MCF 10A (cell line): ENCODE measurements at regions of chr6 and their contacts with region 1.

Region 1: DNA sequence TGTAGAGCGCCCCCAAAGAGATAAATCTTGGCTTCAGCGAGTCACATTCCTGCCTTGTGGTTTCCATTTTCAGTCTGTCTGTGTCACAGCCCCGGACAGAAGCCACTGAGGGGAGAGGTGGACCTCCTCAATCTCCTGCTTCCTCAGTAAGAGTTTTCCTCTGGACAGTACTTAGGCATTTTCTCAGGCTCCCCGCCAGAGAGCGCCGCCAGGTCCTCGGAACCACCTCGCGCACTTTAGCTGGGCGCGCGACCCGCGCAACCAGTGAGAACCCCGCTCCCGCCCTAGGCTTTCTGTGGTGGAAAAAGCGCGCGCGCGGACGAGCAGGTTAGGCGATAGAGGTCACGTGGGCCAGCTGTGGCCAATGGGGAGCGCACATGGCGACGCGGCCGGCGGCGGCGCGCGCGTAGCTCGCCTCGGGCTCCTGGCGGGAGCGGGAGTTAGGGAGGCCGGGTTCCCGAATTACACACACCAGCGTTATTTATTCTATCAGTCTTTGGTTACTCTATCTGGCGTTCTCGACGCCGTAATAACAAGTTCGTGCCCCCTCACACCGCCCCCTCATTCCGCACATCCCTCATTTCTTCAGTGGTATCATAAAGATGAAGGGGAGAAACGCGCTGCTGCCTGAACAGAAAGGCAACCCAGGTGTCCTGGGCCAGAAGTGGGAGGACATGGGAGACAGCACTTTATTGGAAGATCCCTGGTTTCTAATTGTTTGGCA is 19.4 kb downstream of the PXT1 start:
- DNase-seq: peak; percentile 98
- H3K4me3 Mint-ChIP-seq: peak overlapping the region; percentile 73
- H3K27ac Mint-ChIP-seq: peak overlapping the region; percentile 91
- H3K4me1 Mint-ChIP-seq: peaks cover 28% of the 10 kb centered on the region
- H3K27me3 Mint-ChIP-seq: no peaks in the 10 kb centered on the region
- CTCF ChIP-seq: peak; percentile 63

Region 2: DNA sequence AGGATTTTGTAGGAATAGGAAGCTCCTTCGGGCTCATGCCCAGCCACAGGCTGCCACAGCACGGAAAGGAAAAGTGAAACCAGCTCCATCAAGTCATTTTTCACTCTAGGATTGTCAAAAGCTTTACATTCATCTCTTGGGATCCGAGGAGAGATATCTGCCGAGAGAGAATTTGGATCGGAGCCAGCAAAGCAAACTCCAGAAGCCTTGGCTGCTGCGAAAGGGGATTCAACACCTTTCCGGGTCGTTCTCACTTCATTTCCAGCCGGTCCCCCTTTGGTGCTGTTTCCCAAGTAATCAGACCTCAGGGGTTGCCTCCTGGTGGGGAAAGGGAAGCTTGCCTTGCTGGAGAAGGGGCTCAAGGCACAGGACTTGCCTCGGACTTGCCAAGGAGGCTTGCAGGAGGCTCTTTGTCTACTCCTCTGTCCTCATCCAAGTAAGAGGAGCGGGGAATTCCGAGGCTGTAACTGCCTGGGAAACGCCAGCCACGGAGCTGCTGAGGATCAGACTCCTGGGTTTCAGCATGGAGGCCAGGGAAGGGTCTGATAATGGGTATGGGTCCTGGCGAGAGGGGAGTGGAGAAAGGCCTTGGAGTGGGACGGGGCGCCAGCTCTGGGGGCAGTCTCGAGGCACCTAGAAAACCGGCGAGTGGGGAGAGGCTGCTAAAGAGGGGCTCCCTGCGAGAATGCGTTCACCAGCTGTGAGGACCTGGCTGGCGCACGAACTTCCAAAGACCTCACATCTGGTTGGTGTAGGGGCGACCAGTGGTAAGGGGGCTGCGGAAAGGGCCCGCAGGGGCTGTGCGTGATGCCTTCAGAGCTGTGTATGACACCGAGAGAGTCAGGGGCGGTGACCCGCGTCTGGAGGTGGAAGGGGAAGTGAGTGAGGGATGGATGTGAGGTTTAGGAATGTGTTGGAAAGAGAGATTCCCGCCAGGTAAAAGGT is 36.5 kb before region 1 on chr6:
- CTCF ChIA-PET with region 1: no interaction called
- POLR2A ChIA-PET with region 1: interaction called, 11 read pairs
- intact Hi-C with region 1: no loop called
- DNase-seq: peak; percentile 45
- H3K4me3 Mint-ChIP-seq: peak overlapping the region; percentile 71
- H3K27ac Mint-ChIP-seq: peak overlapping the region; percentile 28
- H3K4me1 Mint-ChIP-seq: peaks cover 7% of the 10 kb centered on the region
- H3K27me3 Mint-ChIP-seq: peaks cover 28% of the 10 kb centered on the region
- CTCF ChIP-seq: no peak

Region 3: GRCh38 chr6:36469148-36469661 is 45.9 kb after region 1 on chr6:
- CTCF ChIA-PET with region 1: no interaction called
- POLR2A ChIA-PET with region 1: interaction called, 4 read pairs
- intact Hi-C with region 1: loop called (anchors 1 kb)
- DNase-seq: no peak
- H3K4me3 Mint-ChIP-seq: no peak overlapping the region
- H3K27ac Mint-ChIP-seq: no peak overlapping the region
- H3K4me1 Mint-ChIP-seq: no peaks in the 10 kb centered on the region
- H3K27me3 Mint-ChIP-seq: no peaks in the 10 kb centered on the region
- CTCF ChIP-seq: no peak

Region 4: DNA sequence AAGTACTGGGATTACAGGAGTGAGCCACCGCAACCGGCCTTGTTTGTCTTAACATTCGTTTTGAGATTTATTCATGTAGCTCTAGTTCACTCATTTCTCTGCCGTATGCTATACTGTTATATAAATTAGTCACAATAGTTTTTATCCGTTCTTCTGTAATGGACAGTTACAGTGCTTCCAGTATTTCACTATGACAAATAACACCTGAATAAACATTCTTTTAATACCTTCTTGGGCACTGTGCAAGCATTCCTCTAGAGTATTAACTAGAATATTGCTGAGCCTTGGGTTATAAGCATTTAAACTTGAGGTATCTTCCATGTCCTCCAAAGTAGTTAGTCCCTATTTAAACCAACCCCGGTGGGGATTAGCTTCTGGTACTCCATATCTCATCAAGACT is 78.4 kb after region 1 on chr6:
- CTCF ChIA-PET with region 1: no interaction called
- POLR2A ChIA-PET with region 1: no interaction called
- intact Hi-C with region 1: no loop called
- DNase-seq: no peak
- H3K4me3 Mint-ChIP-seq: no peak overlapping the region
- H3K27ac Mint-ChIP-seq: no peak overlapping the region
- H3K4me1 Mint-ChIP-seq: no peaks in the 10 kb centered on the region
- H3K27me3 Mint-ChIP-seq: no peaks in the 10 kb centered on the region
- CTCF ChIP-seq: no peak

Region 5: GRCh38 chr6:36594029-36594815 is 171.0 kb after region 1 on chr6 and contains the start of gene SRSF3:
- CTCF ChIA-PET with region 1: interaction called, 3 read pairs
- POLR2A ChIA-PET with region 1: interaction called, 11 read pairs
- intact Hi-C with region 1: loop called (anchors 5 kb)
- DNase-seq: peak; percentile 98
- H3K4me3 Mint-ChIP-seq: peak within 1 kb of the TSS; percentile 84
- H3K27ac Mint-ChIP-seq: peak within 1 kb of the TSS; percentile 99
- H3K4me1 Mint-ChIP-seq: peaks cover 20% of the 10 kb centered on the region
- H3K27me3 Mint-ChIP-seq: no peaks in the 10 kb centered on the region
- CTCF ChIP-seq: no peak
- total RNA-seq, gene SRSF3: 364 and 479 TPM in 2 replicates

Region 6: DNA sequence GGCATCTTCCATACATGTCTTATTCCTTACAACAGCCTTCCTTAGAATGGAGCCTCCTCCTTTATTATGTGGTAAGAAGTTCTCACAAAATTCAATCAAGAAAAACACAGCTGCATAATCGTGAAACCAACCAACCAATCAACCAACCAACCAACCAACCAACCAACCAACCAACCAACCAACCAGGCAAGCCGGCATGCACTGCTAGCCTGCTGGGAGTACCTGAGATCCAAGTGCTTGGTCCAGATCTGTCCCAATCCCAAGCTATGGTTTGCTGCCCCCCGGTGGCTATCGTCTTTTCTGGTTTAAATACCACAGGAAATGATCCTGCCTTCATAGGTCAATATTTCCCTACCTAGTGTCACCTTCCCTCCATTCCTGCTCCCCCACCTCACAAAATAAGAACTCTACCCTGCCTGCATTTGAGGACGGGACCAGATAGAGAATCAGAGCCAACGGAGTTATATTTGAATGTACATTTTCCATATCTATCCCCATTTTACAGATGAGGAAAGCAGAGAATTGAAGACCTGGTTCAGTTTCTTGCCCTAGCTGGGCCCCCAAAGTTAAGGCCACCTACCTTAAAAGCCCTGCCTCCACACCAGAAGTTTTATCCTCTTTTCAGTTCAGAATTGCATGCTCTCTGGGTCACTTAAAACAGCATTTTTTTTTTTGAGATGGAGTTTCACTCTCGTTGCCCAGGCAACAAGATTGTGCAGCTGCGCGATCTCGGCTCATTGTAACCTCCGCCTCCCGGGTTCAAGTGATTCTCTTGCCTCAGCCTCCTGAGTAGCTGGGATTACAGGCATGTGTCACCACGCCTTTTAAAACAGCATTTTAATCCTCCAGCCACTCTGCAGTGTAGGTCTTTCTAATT is 301.5 kb after region 1 on chr6:
- CTCF ChIA-PET with region 1: no interaction called
- POLR2A ChIA-PET with region 1: interaction called, 3 read pairs
- intact Hi-C with region 1: loop called (anchors 1 kb)
- DNase-seq: peak; percentile 82
- H3K4me3 Mint-ChIP-seq: no peak overlapping the region
- H3K27ac Mint-ChIP-seq: no peak overlapping the region
- H3K4me1 Mint-ChIP-seq: peaks cover 18% of the 10 kb centered on the region
- H3K27me3 Mint-ChIP-seq: no peaks in the 10 kb centered on the region
- CTCF ChIP-seq: peak; percentile 71

Region 7: GRCh38 chr6:36968266-36968977 is 545.2 kb after region 1 on chr6:
- CTCF ChIA-PET with region 1: no interaction called
- POLR2A ChIA-PET with region 1: no interaction called
- intact Hi-C with region 1: no loop called
- DNase-seq: peak; percentile 74
- H3K4me3 Mint-ChIP-seq: no peak overlapping the region
- H3K27ac Mint-ChIP-seq: no peak overlapping the region
- H3K4me1 Mint-ChIP-seq: peaks cover 26% of the 10 kb centered on the region
- H3K27me3 Mint-ChIP-seq: no peaks in the 10 kb centered on the region
- CTCF ChIP-seq: no peak